Common myeloid progenitor, CD34-positive (primary cell): ENCODE measurements at regions of chr17 and their contacts with region 1.

Region 1: DNA sequence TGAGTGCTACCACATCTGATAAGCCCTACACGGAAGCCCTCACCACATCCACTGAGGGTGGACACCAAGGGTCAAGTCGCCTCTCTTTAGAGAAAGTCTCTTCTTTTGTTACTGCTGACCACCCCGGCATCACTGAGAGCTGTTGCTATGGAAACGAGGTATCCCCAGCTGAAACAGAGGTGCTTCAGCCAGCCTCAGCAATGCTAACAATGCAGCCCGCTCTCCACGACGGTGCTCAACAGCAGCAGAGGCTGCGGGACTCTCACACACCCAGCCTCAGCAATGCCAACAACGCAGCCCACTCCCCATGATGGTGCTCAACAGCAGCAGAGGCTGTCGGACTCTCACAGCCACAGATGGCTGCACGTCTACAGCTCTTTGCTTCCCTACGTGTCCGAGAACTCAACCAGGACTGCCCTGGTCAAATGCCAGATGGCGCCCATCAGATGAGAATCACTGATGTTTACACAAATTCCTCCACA is 41.4 kb downstream of the VPS53 start:
- DNase-seq: no peak
- H3K4me3 ChIP-seq: no peak overlapping the region
- H3K27ac ChIP-seq: no peak overlapping the region
- H3K4me1 ChIP-seq: no peaks in the 10 kb centered on the region
- H3K27me3 ChIP-seq: no peaks in the 10 kb centered on the region

Region 2: DNA sequence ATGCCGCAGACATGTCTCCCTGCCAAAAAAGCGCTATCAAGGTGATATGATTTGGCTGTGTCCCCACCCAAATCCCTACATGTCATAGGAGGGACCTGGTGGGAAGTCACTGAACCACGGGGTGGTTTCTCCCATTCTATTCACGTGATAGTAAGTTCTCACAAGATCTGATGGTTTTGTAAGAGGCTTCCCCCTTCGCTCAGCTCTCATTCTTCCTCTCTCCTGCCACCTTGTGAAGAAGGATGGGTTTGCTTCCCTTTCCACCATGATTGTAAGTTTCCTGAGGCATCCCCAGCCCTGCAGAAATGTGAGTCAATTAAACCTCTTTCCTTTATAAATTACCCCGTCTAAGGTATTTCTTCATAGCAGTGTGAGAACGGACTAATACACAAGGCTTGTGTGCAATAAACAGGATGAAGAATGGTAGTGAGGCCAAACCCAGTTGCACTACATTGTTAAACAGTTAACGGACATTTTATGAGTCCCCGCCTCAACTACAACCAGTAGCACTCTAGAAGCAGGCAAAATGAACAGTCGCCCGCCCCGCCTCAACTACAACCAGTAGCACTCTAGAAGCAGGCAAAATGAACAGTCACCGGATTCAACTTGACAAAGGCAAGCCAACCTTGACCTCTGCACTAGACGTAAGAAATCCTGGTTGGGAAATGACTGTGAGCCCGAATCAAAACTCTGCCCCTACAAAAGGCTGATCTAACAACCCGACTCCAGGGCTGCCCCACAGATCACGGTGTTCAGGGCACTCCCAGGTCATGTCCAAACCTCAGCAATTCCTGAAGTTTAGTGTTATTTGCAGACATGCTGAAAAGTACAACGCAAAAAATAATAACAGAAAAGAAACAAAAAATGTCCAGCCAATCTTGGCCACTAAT is 15.1 kb after region 1 on chr17:
- CTCF ChIA-PET with region 1: interaction called, 11 read pairs
- POLR2A ChIA-PET with region 1: no interaction called
- DNase-seq: peak; percentile 76 to 81 (median 80)
- H3K4me3 ChIP-seq: no peak overlapping the region
- H3K27ac ChIP-seq: no peak overlapping the region
- H3K4me1 ChIP-seq: peaks cover 0 to 2% (median 0%) of the 10 kb centered on the region in 4 experiments
- H3K27me3 ChIP-seq: no peaks in the 10 kb centered on the region